AG04450 (cell line): ENCODE measurements at regions of chr7 and their contacts with region 1.

Region 1: GRCh38 chr7:139016931-139017511 is 18.8 kb downstream of the ZC3HAV1L start:
- DNase-seq: peak; percentile 41
- H3K4me3 ChIP-seq: no peak overlapping the region
- H3K27ac ChIP-seq: no peak overlapping the region
- H3K27me3 ChIP-seq: no peaks in the 10 kb centered on the region
- CTCF ChIP-seq: peak; percentile 78

Region 2: GRCh38 chr7:138542183-138542582 is 474.8 kb before region 1 on chr7:
- CTCF ChIA-PET with region 1: interaction called, 13 read pairs
- POLR2A ChIA-PET with region 1: no interaction called
- DNase-seq: no peak
- H3K4me3 ChIP-seq: no peak overlapping the region
- H3K27ac ChIP-seq: no peak overlapping the region
- H3K27me3 ChIP-seq: no peaks in the 10 kb centered on the region
- CTCF ChIP-seq: no peak

Region 3: GRCh38 chr7:139058943-139059342 is 41.9 kb after region 1 on chr7:
- CTCF ChIA-PET with region 1: interaction called, 18 read pairs
- POLR2A ChIA-PET with region 1: no interaction called
- DNase-seq: no peak
- H3K4me3 ChIP-seq: no peak overlapping the region
- H3K27ac ChIP-seq: no peak overlapping the region
- H3K27me3 ChIP-seq: no peaks in the 10 kb centered on the region
- CTCF ChIP-seq: no peak

Region 4: GRCh38 chr7:139068544-139069399 is 51.8 kb after region 1 on chr7:
- CTCF ChIA-PET with region 1: interaction called, 103 read pairs
- POLR2A ChIA-PET with region 1: no interaction called
- DNase-seq: no peak
- H3K4me3 ChIP-seq: no peak overlapping the region
- H3K27ac ChIP-seq: no peak overlapping the region
- H3K27me3 ChIP-seq: no peaks in the 10 kb centered on the region
- CTCF ChIP-seq: no peak